Thyroid gland (tissue), 4 donors: ENCODE measurements at regions of chr15 and their contacts with region 1.

Region 1: DNA sequence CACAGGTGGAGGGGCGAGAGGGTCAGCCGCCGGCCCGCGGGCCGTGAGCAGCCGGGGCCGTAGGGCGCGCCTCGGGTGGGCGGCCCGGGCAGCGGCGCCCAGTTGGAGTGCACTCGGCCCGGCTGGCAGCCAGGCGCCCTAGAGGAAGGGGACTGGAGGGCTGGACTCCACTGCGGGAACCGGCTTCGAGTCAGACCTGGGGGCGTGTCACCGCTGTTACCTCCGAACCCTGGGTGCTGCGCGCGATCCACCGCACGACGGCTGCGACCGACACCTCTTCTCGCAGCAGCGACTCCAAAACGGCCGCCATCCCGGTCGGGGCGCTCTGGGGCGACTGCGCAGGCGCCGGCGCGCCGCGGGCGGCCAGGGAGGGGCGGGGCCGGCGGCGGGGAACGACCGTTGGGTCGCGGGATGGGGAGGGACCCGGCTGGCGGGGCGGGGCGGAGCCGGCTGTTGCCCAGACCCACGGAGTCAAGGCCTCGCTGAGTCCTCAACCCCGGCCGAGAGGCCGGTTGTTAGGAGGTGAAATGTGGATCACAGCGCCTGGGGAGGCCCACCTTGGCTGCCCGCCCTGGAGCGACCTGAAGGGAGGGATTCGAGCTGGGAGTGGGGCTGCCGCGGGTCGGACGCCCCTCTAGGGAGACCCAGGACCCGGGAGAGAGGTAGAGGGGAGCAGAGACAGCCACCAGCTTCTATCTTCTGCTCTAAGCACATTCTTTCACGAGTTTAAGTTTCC is at the start of gene CDAN1:
- DNase-seq: peak; percentile 92
- H3K4me3 ChIP-seq: peak within 1 kb of the TSS; percentile 72 to 92 (median 89)
- H3K27ac ChIP-seq: peak within 1 kb of the TSS; percentile 79 to 82 (median 80)
- H3K4me1 ChIP-seq: peaks cover 11 to 15% of the 10 kb centered on the region in 2 donors
- H3K27me3 ChIP-seq: no peaks in the 10 kb centered on the region
- CTCF ChIP-seq: no peak
- POLR2A ChIP-seq: peak in 1 of 2 donors; percentile 82
- total RNA-seq, gene CDAN1: 9.4 to 15.9 (median 12.6) TPM

Region 2: DNA sequence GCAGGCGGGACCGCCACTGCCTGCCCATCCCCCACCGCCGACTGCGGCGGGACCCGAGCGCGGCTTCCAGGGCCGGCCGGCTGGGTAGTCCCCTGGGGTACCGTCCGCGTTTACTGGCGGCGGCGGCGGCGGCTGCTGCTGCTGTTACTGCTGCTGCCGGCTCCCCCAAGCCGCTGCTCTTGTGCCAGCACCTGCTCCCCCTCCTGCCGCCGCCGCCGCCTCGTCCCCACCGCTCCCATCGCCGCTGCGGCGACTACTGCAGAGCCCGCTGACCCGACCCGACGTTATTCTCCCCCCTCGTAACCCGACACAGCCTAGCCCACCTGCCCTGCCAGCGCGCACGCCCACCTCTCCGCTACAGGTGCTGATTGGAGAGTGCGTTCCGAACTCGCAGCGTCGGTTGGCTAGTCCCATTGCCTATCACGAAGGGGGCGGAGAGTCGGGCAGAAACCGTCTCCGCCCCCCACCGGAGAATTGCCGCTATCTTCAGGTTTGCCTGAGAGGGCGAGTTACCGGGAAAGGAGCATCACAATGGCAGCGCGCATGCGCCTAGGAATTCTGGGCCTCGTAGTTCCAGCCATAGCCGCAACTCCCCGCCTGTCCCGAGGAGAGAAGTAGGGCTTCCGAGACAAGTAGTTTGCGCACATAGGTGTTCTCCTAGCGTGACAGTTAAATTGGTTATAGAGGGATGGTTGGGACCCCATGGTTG is 183.7 kb after region 1 on chr15 and contains the start of gene TTBK2:
- intact Hi-C with region 1: loop called (anchors 10 kb)
- DNase-seq: peak; percentile 98
- H3K4me3 ChIP-seq: peak within 1 kb of the TSS; percentile 16 to 94 (median 63)
- H3K27ac ChIP-seq: peak within 1 kb of the TSS; percentile 33 to 83 (median 74)
- H3K4me1 ChIP-seq: peaks cover 8 to 11% of the 10 kb centered on the region in 2 donors
- H3K27me3 ChIP-seq: no peaks in the 10 kb centered on the region
- CTCF ChIP-seq: peak in 3 of 6 experiments; percentile 21 to 31 (median 26)
- POLR2A ChIP-seq: peak; percentile 21 to 66
- total RNA-seq, gene TTBK2: 15.7 to 26.9 (median 20.0) TPM